A549 (cell line): ENCODE measurements at regions of chr1 and their contacts with region 1.

Region 1: GRCh38 chr1:27365372-27366112 is 1.2 kb downstream of the MAP3K6 start:
- DNase-seq: peak; percentile 74 to 87
- ATAC-seq: peak; percentile 81 to 86
- H3K4me3 ChIP-seq: peak overlapping the region; percentile 78
- H3K27ac ChIP-seq: peak overlapping the region; percentile 93 to 97
- H3K4me1 ChIP-seq: peaks cover 14% of the 10 kb centered on the region
- CTCF ChIP-seq: no peak
- EP300 ChIP-seq: no peak
- POLR2A ChIP-seq: no peak
- RAD21 ChIP-seq: no peak

Region 2: DNA sequence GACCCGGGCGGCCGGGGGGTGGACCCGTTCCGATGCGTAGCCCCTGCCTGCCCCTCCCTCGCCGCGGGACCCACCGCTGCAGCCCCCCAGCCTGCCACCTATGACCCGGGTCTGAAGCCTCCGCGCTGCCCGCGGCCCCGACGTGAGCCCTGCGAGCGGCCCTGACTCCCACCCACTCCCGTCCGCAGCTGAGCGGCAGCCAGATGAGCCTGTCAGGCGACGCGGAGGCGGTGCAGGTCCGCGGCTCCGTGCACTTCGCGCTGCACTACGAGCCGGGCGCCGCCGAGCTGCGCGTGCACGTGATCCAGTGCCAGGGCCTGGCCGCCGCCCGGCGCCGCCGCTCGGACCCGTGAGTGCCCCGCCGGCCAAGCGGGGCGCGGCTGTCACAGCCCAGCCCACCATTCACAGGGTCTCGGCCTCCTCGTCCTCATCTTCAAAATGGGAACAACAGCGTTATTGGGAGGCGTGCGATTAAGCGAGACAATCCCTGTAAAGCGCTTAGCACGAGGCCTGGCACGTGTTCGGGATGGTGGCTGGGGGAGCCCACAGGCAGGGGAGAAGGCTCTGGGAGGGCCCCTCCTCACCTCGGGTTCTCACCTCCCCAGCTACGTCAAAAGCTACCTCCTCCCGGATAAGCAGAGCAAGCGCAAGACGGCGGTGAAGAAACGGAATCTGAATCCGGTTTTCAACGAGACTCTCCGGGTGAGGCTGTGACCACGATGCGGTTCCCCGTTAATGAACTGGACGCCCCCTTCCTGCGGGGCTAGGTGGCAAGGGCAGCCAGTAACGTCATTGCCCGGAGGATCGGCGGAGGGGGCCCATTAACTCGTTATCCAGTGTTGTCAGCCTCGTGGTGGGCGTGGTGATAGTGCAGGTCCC is 15.5 kb before region 1 on chr1:
- CTCF ChIA-PET with region 1: interaction called, 130 read pairs
- POLR2A ChIA-PET with region 1: interaction called, 11 read pairs
- DNase-seq: peak; percentile 70 to 80
- ATAC-seq: peak; percentile 89 to 94
- H3K4me3 ChIP-seq: peak overlapping the region; percentile 48
- H3K27ac ChIP-seq: peak overlapping the region; percentile 78 to 89
- H3K4me1 ChIP-seq: peaks cover 14% of the 10 kb centered on the region; the same call in 1 of the 3 replicates
- CTCF ChIP-seq: no peak
- EP300 ChIP-seq: no peak
- POLR2A ChIP-seq: peak; percentile 16; the same call in 1 of the 2 replicates
- RAD21 ChIP-seq: no peak

Region 3: GRCh38 chr1:27377760-27378495 is 12.4 kb after region 1 on chr1:
- CTCF ChIA-PET with region 1: interaction called, 10 read pairs
- POLR2A ChIA-PET with region 1: interaction called, 6 read pairs
- DNase-seq: no peak
- ATAC-seq: no peak
- H3K4me3 ChIP-seq: no peak overlapping the region
- H3K27ac ChIP-seq: no peak overlapping the region
- H3K4me1 ChIP-seq: no peaks in the 10 kb centered on the region
- CTCF ChIP-seq: no peak
- EP300 ChIP-seq: no peak
- POLR2A ChIP-seq: no peak
- RAD21 ChIP-seq: no peak

Region 4: GRCh38 chr1:27392096-27392777 is 26.7 kb after region 1 on chr1 and contains the start of gene GPR3:
- CTCF ChIA-PET with region 1: interaction called, 40 read pairs
- POLR2A ChIA-PET with region 1: interaction called, 13 read pairs
- DNase-seq: peak; percentile 81 to 88
- ATAC-seq: peak; percentile 74 to 85
- H3K4me3 ChIP-seq: peak within 1 kb of the TSS; percentile 70
- H3K27ac ChIP-seq: peak within 1 kb of the TSS; percentile 74 to 89
- H3K4me1 ChIP-seq: peaks cover 17% of the 10 kb centered on the region
- CTCF ChIP-seq: peak; percentile 50
- EP300 ChIP-seq: no peak
- POLR2A ChIP-seq: no peak
- RAD21 ChIP-seq: peak; percentile 12 to 33; a peak in 2 of 5 replicates
- polyA plus RNA-seq, gene GPR3: 1.3 and 1.7 TPM in 2 replicates

Region 5: DNA sequence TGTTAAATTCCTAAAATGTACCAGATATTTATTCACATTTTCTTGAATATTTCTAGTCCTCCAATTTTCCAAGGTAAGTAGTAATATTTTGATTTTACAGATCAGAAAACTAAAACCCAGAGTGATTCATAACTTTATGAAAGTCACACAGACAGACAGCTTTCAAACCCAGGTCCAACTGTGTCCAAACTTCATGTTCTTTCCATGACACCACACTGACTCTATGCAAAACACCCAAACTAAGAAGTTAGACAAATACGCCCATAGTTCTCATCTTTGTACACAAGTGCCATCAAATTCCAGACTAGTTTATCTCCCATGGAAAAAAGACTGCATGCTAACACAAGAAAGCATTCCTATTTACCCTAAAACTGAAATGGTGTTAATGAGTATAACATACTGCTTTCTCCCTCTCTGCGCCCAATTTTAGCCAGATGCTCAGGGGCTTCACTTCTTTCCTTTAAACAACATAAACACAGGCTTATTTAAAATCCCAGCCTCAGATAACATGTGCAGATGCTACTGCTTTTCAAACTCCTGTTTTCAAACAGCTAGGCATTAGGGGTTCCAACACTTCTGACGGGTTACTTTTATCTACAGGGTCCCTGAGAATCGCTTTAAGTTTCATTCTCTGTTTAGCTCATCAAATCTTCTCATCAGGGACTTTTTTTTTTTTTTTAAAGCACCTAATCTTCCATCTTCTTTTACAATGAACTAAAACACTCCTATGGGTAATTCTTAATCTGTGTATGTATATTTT is 79.8 kb after region 1 on chr1:
- CTCF ChIA-PET with region 1: no interaction called
- POLR2A ChIA-PET with region 1: no interaction called
- DNase-seq: no peak
- ATAC-seq: no peak
- H3K4me3 ChIP-seq: no peak overlapping the region
- H3K27ac ChIP-seq: no peak overlapping the region
- H3K4me1 ChIP-seq: no peaks in the 10 kb centered on the region
- CTCF ChIP-seq: no peak
- EP300 ChIP-seq: no peak
- POLR2A ChIP-seq: no peak
- RAD21 ChIP-seq: no peak